ENCODE measurements at regions of chr10 and their contacts with region 1.

Region 1: DNA sequence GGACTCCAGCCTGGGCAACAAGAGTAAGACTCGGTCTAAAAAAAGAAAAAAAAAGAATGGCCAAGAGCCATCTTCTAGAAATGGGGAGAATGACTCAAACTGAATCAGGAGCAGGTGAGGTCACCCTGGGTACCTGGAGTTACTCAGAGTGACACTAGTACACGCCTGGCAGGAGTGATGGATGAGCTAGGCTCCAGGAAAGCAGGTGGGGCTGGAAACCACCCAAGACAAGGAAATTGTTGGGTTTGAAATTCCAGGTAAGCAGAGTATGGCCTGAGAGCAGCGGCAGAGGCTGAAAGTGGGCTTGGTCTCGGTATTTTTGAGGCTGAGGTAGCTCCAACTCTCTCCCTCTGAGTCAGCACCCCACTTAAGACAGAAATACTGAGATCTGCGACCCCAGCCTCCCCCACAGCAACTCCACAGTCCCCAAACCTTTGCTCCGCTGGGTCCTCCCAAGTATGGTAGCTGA is 18.5 kb downstream of the DDIT4 start:
- DNase-seq: peak; percentile 55
- ATAC-seq: peak; percentile 27
- H3K4me3 Mint-ChIP-seq: peak overlapping the region; percentile 7
- H3K27ac Mint-ChIP-seq: peak overlapping the region; percentile 84
- H3K4me1 Mint-ChIP-seq: peaks cover 64% of the 10 kb centered on the region
- H3K27me3 Mint-ChIP-seq: no peaks in the 10 kb centered on the region

Region 2: GRCh38 chr10:72146071-72146470 is 146.2 kb before region 1 on chr10:
- CTCF ChIA-PET with region 1: no interaction called
- POLR2A ChIA-PET with region 1: no interaction called
- DNase-seq: no peak
- ATAC-seq: no peak
- H3K4me3 Mint-ChIP-seq: no peak overlapping the region
- H3K27ac Mint-ChIP-seq: no peak overlapping the region
- H3K4me1 Mint-ChIP-seq: no peaks in the 10 kb centered on the region
- H3K27me3 Mint-ChIP-seq: no peaks in the 10 kb centered on the region

Region 3: GRCh38 chr10:72204296-72204695 is 88.0 kb before region 1 on chr10:
- CTCF ChIA-PET with region 1: no interaction called
- POLR2A ChIA-PET with region 1: no interaction called
- DNase-seq: no peak
- ATAC-seq: no peak
- H3K4me3 Mint-ChIP-seq: no peak overlapping the region
- H3K27ac Mint-ChIP-seq: no peak overlapping the region
- H3K4me1 Mint-ChIP-seq: peaks cover 12% of the 10 kb centered on the region
- H3K27me3 Mint-ChIP-seq: no peaks in the 10 kb centered on the region

Region 4: GRCh38 chr10:72248468-72249151 is 43.6 kb before region 1 on chr10:
- CTCF ChIA-PET with region 1: interaction called, 5 read pairs
- POLR2A ChIA-PET with region 1: interaction called, 18 read pairs
- DNase-seq: peak; percentile 91
- ATAC-seq: peak; percentile 88
- H3K4me3 Mint-ChIP-seq: peak overlapping the region; percentile 80
- H3K27ac Mint-ChIP-seq: peak overlapping the region; percentile 95
- H3K4me1 Mint-ChIP-seq: peaks cover 85% of the 10 kb centered on the region
- H3K27me3 Mint-ChIP-seq: no peaks in the 10 kb centered on the region

Region 5: GRCh38 chr10:72308320-72308987 is 16.2 kb after region 1 on chr10:
- CTCF ChIA-PET with region 1: interaction called, 11 read pairs
- POLR2A ChIA-PET with region 1: interaction called, 21 read pairs
- DNase-seq: peak; percentile 53
- ATAC-seq: peak; percentile 53
- H3K4me3 Mint-ChIP-seq: no peak overlapping the region
- H3K27ac Mint-ChIP-seq: peak overlapping the region; percentile 80
- H3K4me1 Mint-ChIP-seq: peaks cover 76% of the 10 kb centered on the region
- H3K27me3 Mint-ChIP-seq: no peaks in the 10 kb centered on the region

Region 6: DNA sequence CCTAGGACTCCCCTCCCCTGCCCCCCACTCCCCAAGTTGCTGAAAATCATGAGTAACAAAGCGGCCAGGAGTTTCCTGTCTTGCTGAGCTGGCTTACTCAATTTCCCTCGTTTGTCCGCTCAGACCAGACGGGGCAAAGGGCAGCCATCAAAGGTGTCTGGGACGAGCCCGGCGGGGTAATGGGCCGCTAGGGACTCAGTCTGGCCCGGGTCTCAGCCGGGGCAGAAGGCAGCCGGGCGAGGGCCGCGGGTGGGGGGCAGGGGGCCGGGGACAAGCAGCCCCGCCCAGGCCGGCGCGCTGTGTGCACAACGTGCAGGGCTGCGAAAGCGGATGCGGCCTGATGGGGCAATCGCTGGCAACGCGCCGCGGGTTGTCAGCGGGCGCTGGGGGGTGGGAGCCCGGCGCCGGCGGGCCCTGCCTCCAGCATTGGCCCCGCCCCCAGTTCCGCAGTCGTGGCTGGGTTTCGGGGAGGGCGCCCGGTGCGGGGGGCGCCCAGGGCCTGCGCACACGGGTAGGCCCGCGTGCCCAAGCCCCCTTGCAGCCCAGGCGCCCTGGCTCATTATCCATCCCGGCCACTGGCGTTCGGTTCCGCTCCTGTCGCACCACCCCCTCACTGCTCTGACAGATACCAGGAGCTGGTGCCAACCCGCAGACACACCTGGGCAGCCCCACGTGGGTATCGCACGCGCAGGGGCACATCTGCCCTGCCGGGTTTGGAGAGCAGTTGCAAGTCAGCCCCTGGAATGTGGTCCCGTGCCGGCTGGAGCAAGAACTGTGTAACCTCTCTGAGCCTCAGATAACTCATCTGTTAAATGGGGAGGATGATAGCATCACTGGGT is 27.4 kb after region 1 on chr10:
- CTCF ChIA-PET with region 1: interaction called, 14 read pairs
- POLR2A ChIA-PET with region 1: interaction called, 76 read pairs
- DNase-seq: peak; percentile 92
- ATAC-seq: peak; percentile 78
- H3K4me3 Mint-ChIP-seq: peak overlapping the region; percentile 81
- H3K27ac Mint-ChIP-seq: peak overlapping the region; percentile 99
- H3K4me1 Mint-ChIP-seq: peaks cover 88% of the 10 kb centered on the region
- H3K27me3 Mint-ChIP-seq: no peaks in the 10 kb centered on the region

Region 7: DNA sequence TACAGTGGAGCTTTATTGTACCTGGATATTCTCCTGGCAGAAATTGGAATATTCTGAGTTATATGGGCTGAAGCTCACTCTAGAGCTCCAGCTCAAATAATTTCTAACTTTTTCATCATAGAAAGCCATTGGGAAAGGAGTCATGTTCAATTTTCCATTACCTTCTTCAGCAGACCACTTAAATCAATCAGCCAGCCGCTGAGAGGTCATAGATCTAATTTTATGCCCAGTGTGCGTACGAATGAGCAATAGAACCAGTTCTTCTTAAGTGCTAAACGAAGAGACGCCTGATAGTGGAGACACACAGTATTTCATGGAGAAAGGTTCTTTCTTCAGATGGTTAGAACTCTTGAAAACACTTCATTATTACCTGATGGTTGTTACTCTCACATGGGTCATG is 97.5 kb after region 1 on chr10:
- CTCF ChIA-PET with region 1: no interaction called
- POLR2A ChIA-PET with region 1: no interaction called
- DNase-seq: no peak
- ATAC-seq: no peak
- H3K4me3 Mint-ChIP-seq: no peak overlapping the region
- H3K27ac Mint-ChIP-seq: no peak overlapping the region
- H3K4me1 Mint-ChIP-seq: peaks cover 4% of the 10 kb centered on the region
- H3K27me3 Mint-ChIP-seq: no peaks in the 10 kb centered on the region

Region 8: GRCh38 chr10:72542396-72542815 is 250.1 kb after region 1 on chr10:
- CTCF ChIA-PET with region 1: no interaction called
- POLR2A ChIA-PET with region 1: no interaction called
- DNase-seq: no peak
- ATAC-seq: no peak
- H3K4me3 Mint-ChIP-seq: no peak overlapping the region
- H3K27ac Mint-ChIP-seq: no peak overlapping the region
- H3K4me1 Mint-ChIP-seq: peaks cover 4% of the 10 kb centered on the region
- H3K27me3 Mint-ChIP-seq: no peaks in the 10 kb centered on the region

Measured in activated CD8-positive, alpha-beta T cell treated with anti-CD3 and anti-CD28 coated beads, Interleukin-2, amount 10 ng/mL, durations not matched to agents 7 days and 5 days (primary cell).